ENCODE measurements at regions of chr7 and their contacts with region 1.

Region 1: GRCh38 chr7:99558306-99559174 is at the start of gene ZNF655:
- DNase-seq: peak; percentile 59
- H3K4me3 ChIP-seq: peak within 1 kb of the TSS; percentile 97
- CTCF ChIP-seq: no peak

Region 2: DNA sequence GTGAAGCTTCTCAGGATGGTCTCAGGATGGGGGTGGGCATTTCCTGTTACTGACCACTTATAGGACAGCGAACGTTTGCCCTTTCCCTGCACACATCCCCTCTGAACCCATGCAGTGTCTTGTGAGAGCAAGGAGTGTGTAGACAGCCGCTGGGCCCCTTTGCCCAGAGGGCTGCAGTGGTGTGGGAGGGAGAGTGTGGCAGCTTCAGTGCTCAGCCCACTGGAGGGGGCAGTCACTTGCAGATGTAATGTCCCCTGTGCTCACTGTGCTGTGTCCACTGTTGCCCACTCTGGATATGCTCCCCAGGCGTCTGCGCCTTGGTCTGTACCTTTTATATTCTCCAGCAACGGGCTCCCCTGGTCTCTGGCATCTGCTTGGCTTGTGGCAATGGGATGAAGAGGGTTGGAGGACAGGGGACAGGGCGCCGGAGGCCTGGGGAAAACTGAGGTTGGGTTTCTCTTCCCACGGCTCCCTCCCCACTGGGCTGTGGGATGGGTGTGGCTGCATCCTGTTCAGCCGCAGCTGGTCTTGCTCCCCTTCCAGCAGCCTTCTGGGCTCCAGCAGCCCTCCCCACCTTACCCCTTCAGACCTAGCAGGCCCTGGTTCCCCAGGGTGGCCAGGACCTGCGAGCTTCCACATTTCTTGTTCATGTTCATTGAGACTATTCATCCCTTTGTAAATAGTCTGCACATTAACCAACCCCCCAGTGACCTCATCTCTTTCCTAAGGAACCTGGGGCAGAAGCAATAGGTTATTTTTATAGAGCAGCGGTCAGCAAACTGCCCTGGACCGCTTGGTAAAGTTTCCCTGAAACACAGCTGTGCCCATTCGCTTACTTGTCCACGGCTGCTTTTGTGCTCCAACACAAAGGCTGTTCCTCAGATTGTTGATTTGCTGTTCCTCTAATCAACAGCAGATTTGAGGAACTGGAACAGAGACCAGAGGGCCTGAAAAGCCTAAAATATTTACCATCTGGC is 79.8 kb before region 1 on chr7:
- in situ Hi-C with region 1: loop called (anchors 5 kb)
- DNase-seq: no peak
- H3K4me3 ChIP-seq: no peak overlapping the region
- CTCF ChIP-seq: no peak

Region 3: GRCh38 chr7:99616359-99617191 is 58.0 kb after region 1 on chr7 and contains the start of gene ZSCAN25:
- in situ Hi-C with region 1: loop called (anchors 10 kb)
- DNase-seq: peak; percentile 79
- H3K4me3 ChIP-seq: peak within 1 kb of the TSS; percentile 64
- CTCF ChIP-seq: peak; percentile 38